Lower lobe of right lung (tissue), 2 donors: ENCODE measurements at regions of chrX and their contacts with region 1.

Region 1: GRCh38 chrX:118847676-118848075 is 24.1 kb downstream of the ZCCHC12 start:
- DNase-seq: no peak
- ATAC-seq: peak; percentile 46 to 74
- H3K4me3 ChIP-seq: no peak overlapping the region
- H3K27ac ChIP-seq: no peak overlapping the region
- H3K4me1 ChIP-seq: no peaks in the 10 kb centered on the region
- H3K27me3 ChIP-seq: no peaks in the 10 kb centered on the region
- CTCF ChIP-seq: peak; percentile 58

Region 2: DNA sequence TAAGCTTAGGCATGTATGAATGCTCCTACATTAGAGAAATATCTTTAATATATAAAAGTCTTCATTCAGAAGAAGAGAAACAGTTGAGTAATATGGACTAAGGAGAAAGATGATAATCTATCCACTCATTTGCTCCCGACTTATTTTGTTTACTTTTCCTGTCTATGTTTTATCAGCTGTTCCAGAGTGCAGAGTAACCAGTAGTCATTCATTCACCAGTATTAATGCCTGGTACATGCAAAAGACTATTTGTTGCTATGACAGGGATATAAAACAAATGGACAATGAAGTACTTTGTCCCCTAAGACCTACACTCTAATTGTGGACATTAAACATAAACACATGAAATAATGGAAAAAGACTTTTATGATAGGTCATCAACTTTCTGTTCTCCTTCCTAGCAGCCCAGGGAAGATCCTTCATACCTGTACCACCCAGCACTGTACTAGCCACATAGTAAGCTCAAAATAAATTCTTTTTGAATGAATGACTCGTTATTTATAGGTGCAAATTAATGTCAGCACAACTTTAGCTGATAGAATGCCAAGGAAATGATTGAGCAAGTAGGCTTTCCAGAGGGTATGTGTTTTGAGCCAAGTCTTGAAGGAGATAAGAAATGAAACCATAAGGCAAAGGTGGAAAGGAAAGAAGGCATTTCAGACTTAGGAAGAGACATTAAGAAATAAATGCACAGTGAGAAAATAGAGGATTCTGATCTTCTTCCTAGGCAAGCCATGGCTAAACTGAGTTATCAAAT is 165.2 kb before region 1 on chrX:
- intact Hi-C with region 1: no loop called
- DNase-seq: no peak
- ATAC-seq: no peak
- H3K4me3 ChIP-seq: no peak overlapping the region
- H3K27ac ChIP-seq: no peak overlapping the region
- H3K4me1 ChIP-seq: no peaks in the 10 kb centered on the region
- H3K27me3 ChIP-seq: no peaks in the 10 kb centered on the region
- CTCF ChIP-seq: no peak

Region 3: DNA sequence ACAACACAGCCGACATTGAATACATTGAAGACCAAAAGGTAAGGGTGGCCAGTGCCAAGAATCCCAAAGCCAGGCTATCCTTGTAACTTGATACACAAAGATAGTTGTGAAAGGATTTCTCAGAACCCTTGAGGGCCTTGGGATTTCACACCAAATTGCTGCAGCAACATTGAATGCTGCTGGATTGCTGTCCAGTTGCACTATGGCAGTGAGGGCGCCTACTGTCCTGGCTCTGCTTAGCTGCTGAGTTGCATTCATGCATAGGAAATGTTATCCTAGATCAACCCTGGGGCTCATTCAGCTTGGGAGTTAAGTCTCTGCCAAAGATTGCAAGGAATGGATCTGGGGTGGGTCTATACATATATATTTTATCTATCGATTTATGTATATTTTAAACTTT is 165.5 kb after region 1 on chrX:
- intact Hi-C with region 1: loop called (anchors 5 kb)
- DNase-seq: no peak
- ATAC-seq: no peak
- H3K4me3 ChIP-seq: no peak overlapping the region
- H3K27ac ChIP-seq: no peak overlapping the region
- H3K4me1 ChIP-seq: no peaks in the 10 kb centered on the region
- H3K27me3 ChIP-seq: no peaks in the 10 kb centered on the region
- CTCF ChIP-seq: no peak

Region 4: DNA sequence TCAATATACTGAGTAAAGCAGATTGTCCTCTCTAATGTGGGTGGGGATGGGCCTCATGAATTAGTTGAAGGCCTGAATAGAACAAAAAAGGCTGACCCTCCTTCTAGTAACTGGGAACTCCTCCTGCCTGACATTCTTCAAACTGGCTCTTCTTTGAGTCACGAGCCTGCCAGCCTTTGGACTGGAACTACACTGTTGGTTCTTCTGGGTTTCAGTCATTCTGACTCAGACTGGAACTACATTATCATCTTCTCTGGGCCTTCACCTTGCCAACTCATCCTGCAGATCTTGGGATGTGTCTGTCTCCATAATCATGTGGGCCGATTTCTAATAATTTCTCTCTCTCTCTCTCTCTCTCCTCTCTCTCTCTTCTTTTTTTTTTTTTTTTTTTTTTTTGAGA is 198.2 kb after region 1 on chrX:
- intact Hi-C with region 1: no loop called
- DNase-seq: no peak
- ATAC-seq: no peak
- H3K4me3 ChIP-seq: no peak overlapping the region
- H3K27ac ChIP-seq: no peak overlapping the region
- H3K4me1 ChIP-seq: peaks cover 9% of the 10 kb centered on the region
- H3K27me3 ChIP-seq: no peaks in the 10 kb centered on the region
- CTCF ChIP-seq: no peak

Region 5: DNA sequence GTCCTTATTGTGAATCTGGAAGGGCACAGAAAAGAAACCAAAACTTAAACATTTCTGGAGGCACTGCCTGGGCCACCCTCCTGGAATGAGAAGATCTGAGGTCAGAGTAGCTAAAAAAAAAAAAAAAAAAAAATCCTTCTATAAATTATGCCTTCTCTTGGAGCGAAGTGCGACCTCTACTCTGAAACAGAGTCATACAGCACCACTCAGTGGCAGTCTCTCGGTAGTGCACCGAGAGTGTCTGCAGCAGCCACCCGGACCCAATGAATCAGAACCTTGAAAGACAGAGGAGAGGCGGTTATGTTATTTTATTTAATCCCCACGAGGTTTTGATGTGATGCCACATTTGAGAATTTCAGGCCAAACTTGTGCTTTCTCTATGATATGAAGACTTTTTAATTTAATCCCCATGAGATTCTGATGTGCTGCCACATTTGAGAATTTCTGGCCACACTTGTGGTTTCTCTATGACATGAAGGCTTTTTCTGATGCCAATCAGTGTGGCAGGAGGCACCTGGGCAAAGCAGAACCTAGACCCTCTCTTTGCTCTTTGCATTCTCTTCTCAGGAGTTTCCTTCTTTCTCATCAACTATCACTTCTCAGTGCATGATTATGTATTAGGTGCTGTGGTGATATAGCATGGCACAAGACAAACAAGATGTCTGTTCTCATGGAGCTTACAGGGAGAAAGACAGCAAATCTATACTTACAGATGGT is 219.5 kb after region 1 on chrX:
- intact Hi-C with region 1: loop called (anchors 10 kb)
- DNase-seq: peak; percentile 51
- ATAC-seq: peak; percentile 76 to 79
- H3K4me3 ChIP-seq: no peak overlapping the region
- H3K27ac ChIP-seq: no peak overlapping the region
- H3K4me1 ChIP-seq: no peaks in the 10 kb centered on the region
- H3K27me3 ChIP-seq: no peaks in the 10 kb centered on the region
- CTCF ChIP-seq: peak; percentile 71